ENCODE measurements at regions of chr10 and their contacts with region 1.

Region 1: DNA sequence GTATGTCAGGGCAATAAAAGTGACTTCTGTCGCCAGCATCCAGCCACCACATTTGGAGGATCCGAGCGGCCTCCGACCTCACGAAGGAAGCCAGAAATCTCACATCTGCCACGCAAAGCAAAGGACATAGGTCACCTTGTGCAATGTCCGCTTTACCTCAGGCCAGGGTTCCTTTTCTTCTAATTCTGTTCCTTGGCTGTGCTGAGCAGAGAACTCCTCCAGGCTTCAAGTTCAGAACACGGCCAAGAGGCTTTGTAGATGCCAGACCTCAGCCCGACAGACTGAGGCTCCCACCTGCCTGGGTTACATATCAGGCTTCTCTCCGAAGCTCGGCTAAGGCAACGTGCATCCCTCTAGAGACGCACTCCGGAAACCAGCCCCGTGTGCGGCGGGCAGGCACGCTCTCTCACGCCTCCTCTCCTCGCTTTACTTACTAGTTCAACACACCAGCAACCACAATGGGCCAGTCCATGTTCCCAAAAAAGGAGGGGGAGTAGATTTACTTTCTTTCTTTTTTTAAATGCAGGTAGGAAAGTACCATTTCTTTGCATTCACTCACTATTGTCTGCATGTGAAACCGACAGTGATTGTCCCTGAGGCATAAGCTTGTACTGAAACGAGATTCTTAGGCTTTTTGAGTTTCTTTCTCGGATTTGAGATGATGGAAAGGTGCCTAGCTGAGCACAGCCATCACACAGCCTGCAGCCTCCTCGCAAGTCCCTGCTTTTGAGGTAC is 122.4 kb upstream of the AFAP1L2 start:
- DNase-seq: peak; percentile 96
- ATAC-seq: peak; percentile 96
- H3K4me3 ChIP-seq: peak overlapping the region; percentile 64 to 84 (median 79)
- H3K4me3 Mint-ChIP-seq: peak overlapping the region; percentile 95
- H3K27ac ChIP-seq: peak overlapping the region; percentile 79 to 96
- H3K27ac Mint-ChIP-seq: peak overlapping the region; percentile 99
- H3K4me1 ChIP-seq: peaks cover 42 to 51% of the 10 kb centered on the region in 2 donors
- H3K4me1 Mint-ChIP-seq: peaks cover 59% of the 10 kb centered on the region
- H3K27me3 ChIP-seq: no peaks in the 10 kb centered on the region
- H3K27me3 Mint-ChIP-seq: no peaks in the 10 kb centered on the region
- CTCF ChIP-seq: no peak

Region 2: DNA sequence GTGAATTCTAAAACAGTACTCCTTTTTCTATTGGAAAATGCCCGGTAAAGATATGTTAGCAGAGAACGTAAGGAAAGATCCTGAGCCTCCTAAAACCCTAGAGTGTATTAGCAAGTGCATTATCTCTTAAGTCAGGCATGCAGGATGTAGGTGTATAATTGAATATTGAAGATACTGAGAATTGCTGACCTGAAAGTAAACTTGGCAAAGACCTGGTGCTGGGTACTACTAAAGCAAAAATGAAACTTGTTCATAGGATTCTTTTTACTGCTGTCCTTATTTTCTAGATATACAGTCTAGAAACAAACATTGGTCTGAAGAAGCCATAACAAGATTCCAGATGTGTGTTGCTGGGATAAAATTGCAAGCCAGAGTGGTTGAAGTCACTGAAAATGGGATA is 306.4 kb before region 1 on chr10:
- CTCF ChIA-PET with region 1: no interaction called
- POLR2A ChIA-PET with region 1: no interaction called
- intact Hi-C with region 1: no loop called
- DNase-seq: no peak
- ATAC-seq: no peak
- H3K4me3 ChIP-seq: no peak overlapping the region
- H3K4me3 Mint-ChIP-seq: no peak overlapping the region
- H3K27ac ChIP-seq: no peak overlapping the region
- H3K27ac Mint-ChIP-seq: no peak overlapping the region
- H3K4me1 ChIP-seq: no peaks in the 10 kb centered on the region
- H3K4me1 Mint-ChIP-seq: no peaks in the 10 kb centered on the region
- H3K27me3 ChIP-seq: no peaks in the 10 kb centered on the region
- H3K27me3 Mint-ChIP-seq: peaks cover 20% of the 10 kb centered on the region
- CTCF ChIP-seq: no peak

Region 3: DNA sequence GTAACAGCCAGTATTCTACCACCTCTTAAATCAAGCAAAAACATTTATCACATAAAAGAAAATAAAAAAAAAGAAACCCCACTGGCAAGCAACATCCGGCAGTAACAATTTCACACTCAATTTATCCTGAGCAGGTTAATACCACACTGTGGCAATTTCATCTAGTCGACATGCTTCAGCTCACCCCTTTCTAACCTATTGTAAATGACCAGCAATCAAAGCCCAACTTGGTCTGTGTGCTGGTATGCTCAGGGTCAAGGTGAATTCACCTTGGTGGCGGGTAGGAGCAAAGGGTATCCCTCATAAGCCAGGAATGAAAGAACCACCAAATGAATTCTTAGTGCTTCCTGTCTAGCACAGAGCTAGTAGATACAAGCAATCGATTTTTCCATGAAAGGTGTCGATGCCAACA is 13.3 kb before region 1 on chr10:
- CTCF ChIA-PET with region 1: interaction called, 9 read pairs
- POLR2A ChIA-PET with region 1: interaction called, 3 read pairs
- intact Hi-C with region 1: loop called (anchors 1 kb)
- DNase-seq: no peak
- ATAC-seq: no peak
- H3K4me3 ChIP-seq: no peak overlapping the region
- H3K4me3 Mint-ChIP-seq: no peak overlapping the region
- H3K27ac ChIP-seq: no peak overlapping the region
- H3K27ac Mint-ChIP-seq: no peak overlapping the region
- H3K4me1 ChIP-seq: peaks cover 40 to 44% of the 10 kb centered on the region in 2 donors
- H3K4me1 Mint-ChIP-seq: peaks cover 79% of the 10 kb centered on the region
- H3K27me3 ChIP-seq: no peaks in the 10 kb centered on the region
- H3K27me3 Mint-ChIP-seq: no peaks in the 10 kb centered on the region
- CTCF ChIP-seq: no peak

Region 4: GRCh38 chr10:114544045-114544659 is 17.5 kb after region 1 on chr10:
- CTCF ChIA-PET with region 1: interaction called, 212 read pairs
- POLR2A ChIA-PET with region 1: interaction called, 19 read pairs
- intact Hi-C with region 1: loop called (anchors 1 kb)
- DNase-seq: peak; percentile 82
- ATAC-seq: peak; percentile 93
- H3K4me3 ChIP-seq: peak overlapping the region in 3 of 5 experiments; percentile 15 to 51 (median 26)
- H3K4me3 Mint-ChIP-seq: peak overlapping the region; percentile 52
- H3K27ac ChIP-seq: peak overlapping the region; percentile 77 to 86
- H3K27ac Mint-ChIP-seq: peak overlapping the region; percentile 90
- H3K4me1 ChIP-seq: peaks cover 35 to 83% of the 10 kb centered on the region in 2 donors
- H3K4me1 Mint-ChIP-seq: peaks cover 70% of the 10 kb centered on the region
- H3K27me3 ChIP-seq: no peaks in the 10 kb centered on the region
- H3K27me3 Mint-ChIP-seq: no peaks in the 10 kb centered on the region
- CTCF ChIP-seq: no peak

Region 5: GRCh38 chr10:114550756-114551635 is 24.3 kb after region 1 on chr10:
- CTCF ChIA-PET with region 1: interaction called, 212 read pairs
- POLR2A ChIA-PET with region 1: interaction called, 16 read pairs
- intact Hi-C with region 1: no loop called
- DNase-seq: peak; percentile 50
- ATAC-seq: no peak
- H3K4me3 ChIP-seq: no peak overlapping the region
- H3K4me3 Mint-ChIP-seq: no peak overlapping the region
- H3K27ac ChIP-seq: no peak overlapping the region
- H3K27ac Mint-ChIP-seq: no peak overlapping the region
- H3K4me1 ChIP-seq: peaks cover under 1 to 25% of the 10 kb centered on the region in 2 donors
- H3K4me1 Mint-ChIP-seq: peaks cover 20% of the 10 kb centered on the region
- H3K27me3 ChIP-seq: no peaks in the 10 kb centered on the region
- H3K27me3 Mint-ChIP-seq: no peaks in the 10 kb centered on the region
- CTCF ChIP-seq: peak; percentile 74

Region 6: GRCh38 chr10:114821293-114821914 is 294.7 kb after region 1 on chr10 and contains the start of gene FHIP2A:
- CTCF ChIA-PET with region 1: interaction called, 3 read pairs
- POLR2A ChIA-PET with region 1: interaction called, 7 read pairs
- intact Hi-C with region 1: loop called (anchors 10 kb)
- DNase-seq: peak; percentile 90
- ATAC-seq: peak; percentile 93
- H3K4me3 ChIP-seq: peak within 1 kb of the TSS; percentile 53 to 86 (median 78)
- H3K4me3 Mint-ChIP-seq: peak within 1 kb of the TSS; percentile 94
- H3K27ac ChIP-seq: peak within 1 kb of the TSS; percentile 57 to 83
- H3K27ac Mint-ChIP-seq: peak within 1 kb of the TSS; percentile 96
- H3K4me1 ChIP-seq: peaks cover 6 to 13% of the 10 kb centered on the region in 2 donors
- H3K4me1 Mint-ChIP-seq: peaks cover 29% of the 10 kb centered on the region
- H3K27me3 ChIP-seq: no peaks in the 10 kb centered on the region
- H3K27me3 Mint-ChIP-seq: no peaks in the 10 kb centered on the region
- CTCF ChIP-seq: peak; percentile 64
- total RNA-seq, gene FHIP2A: 18.2 and 28.6 TPM in 2 replicates

Region 7: DNA sequence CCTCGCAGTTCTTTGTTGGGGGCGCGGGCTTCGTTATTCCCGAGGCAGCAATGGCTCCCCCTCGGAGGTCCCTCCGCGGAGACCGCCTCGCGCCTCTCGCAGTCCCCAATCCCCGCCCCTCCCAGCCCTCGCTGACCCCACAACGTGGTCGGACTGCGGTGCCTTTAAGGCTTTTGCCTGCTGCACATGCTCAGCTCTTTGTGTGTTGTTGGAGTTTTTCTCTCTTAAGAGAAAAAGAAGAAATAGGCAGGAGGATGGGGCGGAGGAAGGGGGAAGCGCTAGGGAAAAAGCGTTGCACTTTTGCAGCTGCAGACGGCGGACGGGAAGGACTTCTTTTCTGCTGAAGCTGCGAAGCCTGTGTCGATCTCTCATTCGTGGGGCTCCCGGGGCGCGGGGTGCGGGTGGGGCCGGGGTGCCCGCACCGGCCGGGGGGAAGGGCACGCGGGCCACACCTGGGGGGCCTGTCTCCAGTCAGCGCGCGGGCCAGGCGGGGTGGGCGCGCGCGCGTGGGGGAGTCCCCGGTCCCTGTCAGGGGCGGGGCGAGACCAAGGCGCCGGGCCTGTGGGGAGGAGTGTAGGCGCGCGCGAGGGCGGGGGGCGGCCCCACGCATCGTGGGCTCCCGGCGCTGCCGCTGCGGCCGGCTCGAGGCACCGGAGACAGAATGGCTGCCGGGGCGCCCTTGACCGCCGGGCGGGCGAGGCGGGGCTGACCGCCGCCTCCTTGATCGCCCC is 566.0 kb after region 1 on chr10:
- CTCF ChIA-PET with region 1: no interaction called
- POLR2A ChIA-PET with region 1: no interaction called
- intact Hi-C with region 1: loop called (anchors 5 kb)
- DNase-seq: peak; percentile 72
- ATAC-seq: peak; percentile 76
- H3K4me3 ChIP-seq: peak overlapping the region; percentile 16 to 61 (median 61)
- H3K4me3 Mint-ChIP-seq: peak overlapping the region; percentile 90
- H3K27ac ChIP-seq: no peak overlapping the region
- H3K27ac Mint-ChIP-seq: no peak overlapping the region
- H3K4me1 ChIP-seq: peaks cover 10 to 16% of the 10 kb centered on the region in 2 donors
- H3K4me1 Mint-ChIP-seq: peaks cover 16% of the 10 kb centered on the region
- H3K27me3 ChIP-seq: peaks cover 0 to 32% (median 20%) of the 10 kb centered on the region in 4 experiments
- H3K27me3 Mint-ChIP-seq: peaks cover 41% of the 10 kb centered on the region
- CTCF ChIP-seq: no peak

Measured in B cell (primary cell).